Posterior cingulate gyrus (tissue), 11 donors: ENCODE measurements at regions of chr15 and their contacts with region 1.

Region 1: GRCh38 chr15:85125056-85125661 is 143.5 kb downstream of the PDE8A start:
- DNase-seq: no peak

Region 2: GRCh38 chr15:84715441-84716035 is 409.6 kb before region 1 on chr15:
- intact Hi-C with region 1: no loop called
- DNase-seq: peak in 9 of 10 donors; percentile 11 to 80 (median 25)

Region 3: GRCh38 chr15:84955089-84955848 is 169.9 kb before region 1 on chr15:
- intact Hi-C with region 1: loop called (anchors 10 kb)
- DNase-seq: peak; percentile 56 to 97 (median 80)

Region 4: GRCh38 chr15:84981054-84981710 is 144.0 kb before region 1 on chr15:
- intact Hi-C with region 1: loop called (anchors 10 kb)
- DNase-seq: peak; percentile 87 to 99 (median 92)

Region 5: GRCh38 chr15:85142312-85142711 is 17.2 kb after region 1 on chr15:
- intact Hi-C with region 1: no loop called
- DNase-seq: no peak